IMR-90 (cell line): ENCODE measurements at regions of chr3 and their contacts with region 1.

Region 1: GRCh38 chr3:178325330-178325729 is 210.9 kb upstream of the KCNMB2 start:
- DNase-seq: peak; percentile 64
- ATAC-seq: peak; percentile 68
- H3K4me3 ChIP-seq: no peak overlapping the region
- H3K27ac ChIP-seq: no peak overlapping the region
- H3K4me1 ChIP-seq: peaks cover 9% of the 10 kb centered on the region
- H3K27me3 ChIP-seq: no peaks in the 10 kb centered on the region
- CTCF ChIP-seq: peak; percentile 64
- POLR2A ChIP-seq: no peak
- RAD21 ChIP-seq: peak; percentile 64

Region 2: DNA sequence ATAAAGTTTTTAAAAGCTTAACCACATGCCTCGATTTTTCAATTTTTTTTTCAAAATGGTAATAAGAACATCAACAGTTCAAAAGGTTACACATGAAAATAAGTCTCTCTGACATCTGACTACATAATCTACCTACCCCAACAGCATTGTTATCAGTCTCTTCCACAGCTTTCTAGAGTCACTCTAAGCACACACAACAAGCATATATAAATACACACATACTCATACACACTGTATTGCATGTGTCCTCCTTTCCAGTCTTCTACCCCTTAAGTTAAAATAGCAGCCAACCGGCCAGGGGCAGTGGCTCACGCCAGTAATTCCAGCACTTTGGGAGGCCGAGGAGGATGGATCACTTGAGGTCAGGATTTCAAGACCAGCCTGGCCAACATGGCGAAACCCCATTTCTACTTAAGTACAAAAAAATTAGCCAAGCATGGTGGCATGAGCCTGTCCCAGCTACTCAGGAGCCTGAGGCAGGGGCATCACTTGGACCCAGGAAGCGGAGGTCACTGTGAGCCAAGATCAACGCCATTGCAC is 1140.2 kb before region 1 on chr3:
- CTCF ChIA-PET with region 1: no interaction called
- POLR2A ChIA-PET with region 1: no interaction called
- dilution Hi-C with region 1: no loop called
- in situ Hi-C with region 1: loop called (anchors 10 kb)
- intact Hi-C with region 1: no loop called
- DNase-seq: no peak
- ATAC-seq: no peak
- H3K4me3 ChIP-seq: no peak overlapping the region
- H3K27ac ChIP-seq: no peak overlapping the region
- H3K4me1 ChIP-seq: peaks cover 6% of the 10 kb centered on the region
- H3K27me3 ChIP-seq: no peaks in the 10 kb centered on the region
- CTCF ChIP-seq: no peak
- POLR2A ChIP-seq: no peak
- RAD21 ChIP-seq: no peak

Region 3: DNA sequence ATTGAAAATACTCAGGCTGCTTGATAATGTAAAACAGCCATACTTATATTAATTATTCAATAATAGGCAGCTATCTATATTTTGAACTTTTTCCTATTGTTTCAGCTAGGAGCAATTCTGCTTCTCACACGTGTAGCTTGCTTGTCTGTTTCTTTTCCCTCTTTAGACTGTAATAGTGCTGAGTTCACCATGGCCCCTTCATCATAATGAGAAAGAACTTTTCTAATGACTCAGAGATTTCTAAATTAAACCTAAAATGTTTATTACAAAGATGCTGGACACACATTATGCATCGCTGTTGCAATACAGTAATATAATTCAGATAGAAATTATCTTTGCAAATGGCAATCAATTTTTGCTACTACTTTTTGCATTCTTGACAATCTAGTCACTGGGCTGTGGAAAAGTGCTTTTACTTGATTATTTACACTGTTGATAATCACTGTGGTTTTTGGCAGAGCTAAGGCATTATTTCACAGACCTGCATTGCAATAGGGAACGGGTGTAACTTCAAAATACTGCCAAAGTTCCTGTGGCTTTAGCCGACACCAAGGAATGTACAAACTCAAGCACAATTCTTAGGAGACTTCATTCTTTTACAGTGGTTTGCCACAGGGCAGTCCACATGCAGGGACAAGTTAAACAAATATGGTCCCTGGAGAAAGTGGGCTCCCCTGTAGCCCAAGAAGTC is 847.0 kb before region 1 on chr3:
- CTCF ChIA-PET with region 1: no interaction called
- POLR2A ChIA-PET with region 1: no interaction called
- dilution Hi-C with region 1: no loop called
- in situ Hi-C with region 1: no loop called
- intact Hi-C with region 1: loop called (anchors 1 kb)
- DNase-seq: peak; percentile 100
- ATAC-seq: peak; percentile 91
- H3K4me3 ChIP-seq: no peak overlapping the region
- H3K27ac ChIP-seq: peak overlapping the region; percentile 79; the same call in 1 of the 2 replicates
- H3K4me1 ChIP-seq: peaks cover 8% of the 10 kb centered on the region
- H3K27me3 ChIP-seq: no peaks in the 10 kb centered on the region
- CTCF ChIP-seq: no peak
- POLR2A ChIP-seq: no peak
- RAD21 ChIP-seq: peak; percentile 41

Region 4: GRCh38 chr3:177777699-177778098 is 547.6 kb before region 1 on chr3:
- CTCF ChIA-PET with region 1: no interaction called
- POLR2A ChIA-PET with region 1: no interaction called
- dilution Hi-C with region 1: no loop called
- in situ Hi-C with region 1: no loop called
- intact Hi-C with region 1: loop called (anchors 5 kb)
- DNase-seq: peak; percentile 56
- ATAC-seq: peak; percentile 43; the same call in 1 of the 2 replicates
- H3K4me3 ChIP-seq: no peak overlapping the region
- H3K27ac ChIP-seq: no peak overlapping the region
- H3K4me1 ChIP-seq: peaks cover 20% of the 10 kb centered on the region
- H3K27me3 ChIP-seq: no peaks in the 10 kb centered on the region
- CTCF ChIP-seq: peak; percentile 57
- POLR2A ChIP-seq: no peak
- RAD21 ChIP-seq: peak; percentile 75

Region 5: DNA sequence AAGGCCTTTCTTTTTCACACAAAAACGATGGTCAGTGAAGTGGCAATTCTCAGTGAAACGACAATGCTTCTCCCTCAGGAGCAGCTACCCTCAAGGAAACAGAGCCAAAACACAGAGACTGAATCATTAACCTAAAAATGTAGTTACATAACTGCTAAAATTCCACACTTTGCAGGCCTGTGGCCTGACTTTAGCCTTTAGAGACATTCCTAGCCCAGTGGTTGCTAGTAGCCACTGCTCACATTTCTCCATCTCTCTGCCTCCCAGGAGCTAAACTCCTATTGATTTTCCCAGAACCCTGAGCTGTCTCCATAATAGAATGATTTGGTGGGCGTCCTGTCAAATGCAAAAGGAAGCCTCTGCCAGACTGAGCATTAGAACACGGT is 419.2 kb before region 1 on chr3:
- CTCF ChIA-PET with region 1: no interaction called
- POLR2A ChIA-PET with region 1: no interaction called
- dilution Hi-C with region 1: no loop called
- in situ Hi-C with region 1: no loop called
- intact Hi-C with region 1: loop called (anchors 1 kb)
- DNase-seq: peak; percentile 83
- ATAC-seq: peak; percentile 63
- H3K4me3 ChIP-seq: no peak overlapping the region
- H3K27ac ChIP-seq: peak overlapping the region; percentile 77; the same call in 1 of the 2 replicates
- H3K4me1 ChIP-seq: peaks cover 12% of the 10 kb centered on the region
- H3K27me3 ChIP-seq: no peaks in the 10 kb centered on the region
- CTCF ChIP-seq: 0 out of 2 replicates have a peak, but pooled peaks have one; percentile 17
- POLR2A ChIP-seq: no peak
- RAD21 ChIP-seq: peak; percentile 30

Region 6: GRCh38 chr3:178275793-178276192 is 49.5 kb before region 1 on chr3:
- CTCF ChIA-PET with region 1: no interaction called
- POLR2A ChIA-PET with region 1: no interaction called
- dilution Hi-C with region 1: no loop called
- in situ Hi-C with region 1: no loop called
- intact Hi-C with region 1: no loop called
- DNase-seq: no peak
- ATAC-seq: no peak
- H3K4me3 ChIP-seq: no peak overlapping the region
- H3K27ac ChIP-seq: no peak overlapping the region
- H3K4me1 ChIP-seq: no peaks in the 10 kb centered on the region; the same call in 1 of the 2 replicates
- H3K27me3 ChIP-seq: no peaks in the 10 kb centered on the region
- CTCF ChIP-seq: no peak
- POLR2A ChIP-seq: no peak
- RAD21 ChIP-seq: no peak

Region 7: DNA sequence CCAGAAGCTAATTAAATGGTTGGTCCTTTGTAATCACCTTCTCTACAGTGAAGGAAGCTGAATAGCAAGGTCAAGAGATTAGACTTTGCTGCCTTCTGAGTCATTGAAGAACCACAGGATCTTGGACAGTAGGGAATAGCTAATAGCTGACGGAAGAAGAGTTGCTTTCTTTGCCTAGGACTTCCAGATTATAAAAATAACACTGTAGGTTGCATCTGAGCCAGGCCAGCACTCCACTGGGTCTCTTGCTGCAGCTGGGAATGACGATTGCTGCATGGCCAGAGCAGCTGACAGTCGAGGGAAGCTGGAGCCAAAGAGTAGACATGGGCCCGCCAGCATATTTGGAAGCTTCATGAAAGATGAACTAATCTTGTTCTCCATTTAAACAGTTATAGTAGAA is 129.4 kb after region 1 on chr3:
- CTCF ChIA-PET with region 1: no interaction called
- POLR2A ChIA-PET with region 1: no interaction called
- dilution Hi-C with region 1: no loop called
- in situ Hi-C with region 1: no loop called
- intact Hi-C with region 1: no loop called
- DNase-seq: peak; percentile 27
- ATAC-seq: 0 out of 2 replicates have a peak, but pooled peaks have one; percentile 17
- H3K4me3 ChIP-seq: no peak overlapping the region
- H3K27ac ChIP-seq: no peak overlapping the region
- H3K4me1 ChIP-seq: no peaks in the 10 kb centered on the region
- H3K27me3 ChIP-seq: peaks cover 5% of the 10 kb centered on the region
- CTCF ChIP-seq: no peak
- POLR2A ChIP-seq: no peak
- RAD21 ChIP-seq: no peak